H1 (cell line): ENCODE measurements at regions of chr15 and their contacts with region 1.

Region 1: GRCh38 chr15:82849556-82850512 is 40.4 kb downstream of the WHAMM start:
- DNase-seq: peak; percentile 81 to 83
- H3K4me3 ChIP-seq: no peak overlapping the region
- H3K27ac ChIP-seq: peak overlapping the region; percentile 29; the same call in 1 of the 2 replicates
- H3K4me1 ChIP-seq: peaks cover 0 to 7% (median 3%) of the 10 kb centered on the region in 4 experiments; a peak in 5 of 7 replicates
- H3K27me3 ChIP-seq: no peaks in the 10 kb centered on the region
- CTCF ChIP-seq: peak; percentile 75 to 97 (median 91)
- EP300 ChIP-seq: no peak
- POLR2A ChIP-seq: 0 out of 3 replicates have a peak, but pooled peaks of 1 of the 2 experiments have one; percentile 40
- RAD21 ChIP-seq: peak; percentile 93 to 94

Region 2: DNA sequence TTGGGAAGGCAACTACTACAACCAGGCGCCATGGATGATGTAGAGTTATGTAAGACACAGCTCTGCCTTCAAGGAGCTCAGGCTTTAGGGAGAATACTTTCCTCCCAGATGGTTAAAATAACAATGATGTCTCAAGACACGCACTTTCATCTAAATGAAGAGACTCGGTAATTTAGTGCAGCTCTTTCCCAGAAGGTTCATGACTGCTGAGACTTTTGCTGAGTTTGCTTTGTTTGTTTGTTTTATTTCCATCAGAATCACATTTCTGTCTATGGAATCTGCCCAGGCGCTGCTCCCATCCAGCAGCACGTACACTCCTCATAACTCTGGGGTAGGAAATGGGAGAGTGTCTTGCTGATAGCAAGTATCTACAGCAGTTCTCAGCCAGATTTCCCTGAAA is 770.1 kb before region 1 on chr15:
- CTCF ChIA-PET with region 1: no interaction called
- POLR2A ChIA-PET with region 1: no interaction called
- DNase-seq: no peak
- H3K4me3 ChIP-seq: no peak overlapping the region
- H3K27ac ChIP-seq: no peak overlapping the region
- H3K4me1 ChIP-seq: peaks cover 0 to 2% (median 0%) of the 10 kb centered on the region in 4 experiments; a peak in 1 of 7 replicates
- H3K27me3 ChIP-seq: no peaks in the 10 kb centered on the region
- CTCF ChIP-seq: no peak
- EP300 ChIP-seq: no peak
- POLR2A ChIP-seq: no peak
- RAD21 ChIP-seq: no peak

Region 3: GRCh38 chr15:82838096-82838735 is 11.6 kb before region 1 on chr15:
- CTCF ChIA-PET with region 1: interaction called, 11 read pairs
- POLR2A ChIA-PET with region 1: no interaction called
- DNase-seq: no peak
- H3K4me3 ChIP-seq: no peak overlapping the region
- H3K27ac ChIP-seq: no peak overlapping the region
- H3K4me1 ChIP-seq: no peaks in the 10 kb centered on the region
- H3K27me3 ChIP-seq: no peaks in the 10 kb centered on the region
- CTCF ChIP-seq: no peak
- EP300 ChIP-seq: no peak
- POLR2A ChIP-seq: no peak
- RAD21 ChIP-seq: no peak

Region 4: DNA sequence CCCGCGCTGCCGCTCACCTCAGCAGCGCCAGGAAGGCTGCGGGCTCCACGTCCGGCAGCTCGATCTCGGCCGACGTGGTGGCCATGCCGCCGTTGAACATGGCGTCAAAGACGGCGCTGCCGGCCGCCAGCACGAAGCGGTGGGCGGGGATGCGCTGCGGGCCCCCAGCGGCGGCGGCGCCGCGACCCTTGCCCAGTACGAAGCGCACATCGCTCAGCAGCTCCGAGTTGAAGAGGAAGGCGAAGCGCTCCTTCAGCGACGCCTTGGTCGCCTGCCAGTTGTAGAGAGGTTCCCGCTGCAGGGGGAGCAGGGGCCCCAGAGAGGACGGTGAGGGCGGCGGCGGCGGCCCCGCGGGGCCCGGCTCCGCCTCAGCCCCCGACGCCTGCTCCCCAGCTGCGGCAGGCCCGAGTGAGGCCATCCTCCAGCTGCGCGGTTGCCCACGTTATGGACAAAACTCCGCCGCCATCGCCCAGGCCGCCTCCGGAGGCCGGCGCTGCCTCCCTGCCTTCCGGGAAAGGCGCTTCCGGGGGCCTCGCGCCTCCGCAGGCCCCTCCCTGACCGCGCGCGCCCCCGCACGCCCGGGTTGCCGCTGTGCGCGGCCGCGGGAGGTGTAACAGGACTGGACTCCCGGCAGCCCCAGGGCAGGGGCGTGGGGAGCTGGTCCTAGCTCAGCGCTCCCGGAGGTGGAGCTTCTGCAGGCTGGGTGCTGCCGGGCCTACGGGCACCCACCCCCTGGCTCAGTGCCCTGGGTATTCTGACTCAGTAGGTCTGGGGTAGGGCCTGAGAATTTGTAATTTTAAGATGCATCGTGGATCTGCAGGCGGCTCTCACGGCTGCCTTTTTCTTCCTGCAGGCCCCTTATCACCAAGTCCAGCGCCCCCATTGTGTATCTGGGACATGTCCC is 217.2 kb after region 1 on chr15 and contains the start of gene BTBD1:
- CTCF ChIA-PET with region 1: no interaction called
- POLR2A ChIA-PET with region 1: no interaction called
- DNase-seq: peak; percentile 58 to 83
- H3K4me3 ChIP-seq: peak within 1 kb of the TSS; percentile 81 to 93 (median 84)
- H3K27ac ChIP-seq: peak within 1 kb of the TSS; percentile 89
- H3K4me1 ChIP-seq: peaks cover 3 to 23% (median 9%) of the 10 kb centered on the region in 4 experiments; a peak in 6 of 7 replicates
- H3K27me3 ChIP-seq: no peaks in the 10 kb centered on the region
- CTCF ChIP-seq: no peak
- EP300 ChIP-seq: no peak; a peak in 1 of 3 replicates
- POLR2A ChIP-seq: peak; percentile 92 to 96
- RAD21 ChIP-seq: peak in 1 of 2 experiments; percentile 10; a peak in 1 of 4 replicates
- total RNA-seq, gene BTBD1: 35.3 and 39.5 TPM in 2 replicates

Region 5: DNA sequence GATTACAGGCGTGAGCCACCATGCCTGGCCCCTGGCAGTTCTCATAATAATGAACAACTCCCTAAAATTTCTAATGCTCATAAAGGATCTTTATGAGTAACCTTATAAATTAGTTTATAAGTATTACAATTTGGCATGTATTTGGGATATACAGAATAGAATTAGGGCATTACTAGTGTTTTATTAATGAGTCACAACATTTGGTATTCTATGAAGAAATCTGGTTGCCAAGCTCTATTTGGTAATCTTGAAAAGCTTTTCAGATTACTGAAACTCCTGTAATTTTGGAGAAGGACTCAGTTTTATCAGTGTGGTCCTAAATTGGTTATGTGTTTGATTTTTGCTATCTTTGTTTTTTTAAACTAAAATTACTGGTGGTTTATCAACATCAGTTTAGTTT is 303.5 kb after region 1 on chr15:
- CTCF ChIA-PET with region 1: no interaction called
- POLR2A ChIA-PET with region 1: no interaction called
- DNase-seq: no peak
- H3K4me3 ChIP-seq: no peak overlapping the region
- H3K27ac ChIP-seq: no peak overlapping the region
- H3K4me1 ChIP-seq: no peaks in the 10 kb centered on the region
- H3K27me3 ChIP-seq: no peaks in the 10 kb centered on the region
- CTCF ChIP-seq: no peak
- EP300 ChIP-seq: no peak
- POLR2A ChIP-seq: no peak
- RAD21 ChIP-seq: no peak